Natural killer cell (primary cell): ENCODE measurements at regions of chr4 and their contacts with region 1.

Region 1: DNA sequence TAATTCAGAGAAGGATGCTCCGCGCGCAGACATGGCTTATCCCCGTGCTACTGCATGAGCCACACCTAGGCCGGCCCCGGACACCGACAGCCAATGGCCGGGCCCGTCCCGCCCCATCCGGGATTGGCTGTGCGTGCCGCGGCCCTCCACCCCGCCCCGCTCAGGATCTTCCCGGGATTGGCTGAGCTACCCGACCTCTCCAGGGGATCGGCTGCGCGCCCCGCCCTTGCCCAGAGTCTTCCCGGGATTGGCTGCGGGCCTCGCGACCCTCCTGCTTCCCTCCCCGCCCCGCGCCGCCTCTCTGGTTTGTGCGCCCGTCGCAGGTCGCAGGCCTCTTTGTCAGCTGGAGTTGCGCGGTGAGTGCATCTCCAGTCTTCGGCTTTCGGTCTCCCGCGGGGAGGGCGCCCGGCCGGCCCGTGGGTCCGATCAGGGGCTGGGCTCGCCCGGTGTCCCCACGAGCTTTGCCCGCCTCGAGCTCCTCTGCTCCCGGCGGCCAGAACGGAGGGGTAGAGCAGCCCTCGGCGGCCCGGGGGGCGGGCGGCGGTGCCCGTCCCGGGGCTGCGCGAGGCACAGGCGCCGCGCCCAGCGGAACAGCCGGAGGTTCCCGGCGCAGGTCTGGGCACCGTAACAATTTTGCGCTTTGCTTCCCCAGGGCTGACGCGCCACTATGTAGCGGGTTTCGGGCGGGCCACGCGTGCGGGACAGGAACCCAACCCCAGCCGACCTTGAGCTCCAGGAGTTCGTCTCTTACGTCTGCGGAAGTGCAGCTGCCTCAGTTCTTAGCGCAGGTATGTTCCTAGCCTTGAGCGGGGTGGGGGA is 38.8 kb downstream of the ERVMER34-1 start:
- DNase-seq: peak; percentile 71 to 96
- ATAC-seq: peak; percentile 90 to 98 (median 95)
- H3K4me3 ChIP-seq: peak overlapping the region; percentile 67
- H3K4me3 Mint-ChIP-seq: peak overlapping the region; percentile 88
- H3K27ac ChIP-seq: peak overlapping the region; percentile 64
- H3K27ac Mint-ChIP-seq: peak overlapping the region; percentile 53 to 68
- H3K4me1 ChIP-seq: peaks cover 18% of the 10 kb centered on the region
- H3K4me1 Mint-ChIP-seq: peaks cover 12 to 31% of the 10 kb centered on the region in 2 donors
- H3K27me3 ChIP-seq: no peaks in the 10 kb centered on the region
- H3K27me3 Mint-ChIP-seq: no peaks in the 10 kb centered on the region
- CTCF ChIP-seq: no peak

Region 2: DNA sequence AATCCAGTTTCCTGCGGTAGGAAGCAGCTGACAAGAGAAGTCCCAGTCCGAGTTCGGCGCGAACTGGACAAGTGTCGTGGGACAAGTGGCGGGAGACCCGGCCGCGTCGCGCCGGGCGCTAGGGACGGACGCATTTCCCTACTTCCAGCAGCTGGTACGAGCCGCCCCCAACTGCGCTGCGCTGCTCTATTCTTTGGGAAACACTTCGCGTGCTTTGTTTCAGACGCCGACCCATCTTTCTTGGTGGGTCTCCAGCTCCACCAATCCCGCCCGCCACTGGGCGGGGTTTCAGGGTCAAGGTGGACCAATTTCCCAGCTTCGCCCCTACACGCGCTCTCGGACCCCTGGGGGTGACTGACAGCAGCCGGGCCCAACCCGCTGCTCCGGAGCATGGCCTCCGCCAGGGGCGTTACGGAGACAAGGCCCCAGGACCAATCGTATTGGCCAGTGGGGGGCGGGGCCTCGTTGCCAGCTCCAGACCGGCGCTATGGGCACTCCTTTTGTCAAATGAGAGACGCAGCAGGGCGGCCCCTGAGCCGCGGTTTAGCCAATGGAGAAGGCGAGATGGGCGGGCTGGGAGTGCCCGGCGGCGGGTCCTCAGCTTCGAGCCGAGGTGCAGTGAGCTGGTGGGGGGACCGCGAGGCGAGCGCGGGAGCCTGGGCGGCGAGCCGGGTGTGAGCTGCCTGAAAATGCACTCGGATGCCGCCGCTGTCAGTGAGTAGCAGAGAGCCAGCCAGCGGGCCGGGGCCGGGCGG is 869.6 kb before region 1 on chr4 and contains the start of gene DCUN1D4:
- intact Hi-C with region 1: loop called (anchors 2 kb)
- DNase-seq: peak; percentile 97
- ATAC-seq: peak; percentile 89 to 97 (median 91)
- H3K4me3 ChIP-seq: peak within 1 kb of the TSS; percentile 77
- H3K4me3 Mint-ChIP-seq: peak within 1 kb of the TSS; percentile 100
- H3K27ac ChIP-seq: peak within 1 kb of the TSS; percentile 65
- H3K27ac Mint-ChIP-seq: peak within 1 kb of the TSS; percentile 92 to 93
- H3K4me1 ChIP-seq: peaks cover 12% of the 10 kb centered on the region
- H3K4me1 Mint-ChIP-seq: peaks cover 22 to 38% of the 10 kb centered on the region in 2 donors
- H3K27me3 ChIP-seq: no peaks in the 10 kb centered on the region
- H3K27me3 Mint-ChIP-seq: peaks cover 0 to 3% of the 10 kb centered on the region in 2 donors
- CTCF ChIP-seq: peak; percentile 21
- total RNA-seq, gene DCUN1D4: 26.9 to 35.9 (median 35.1) TPM